ENCODE measurements at regions of chr19 and their contacts with region 1.

Region 1: GRCh38 chr19:588093-588740 is 1.5 kb upstream of the HCN2 start:
- DNase-seq: peak; percentile 87
- ATAC-seq: peak; percentile 77
- H3K4me3 Mint-ChIP-seq: no peak overlapping the region
- H3K27ac Mint-ChIP-seq: no peak overlapping the region
- H3K4me1 Mint-ChIP-seq: peaks cover 3% of the 10 kb centered on the region
- H3K27me3 Mint-ChIP-seq: peaks cover 19% of the 10 kb centered on the region

Region 2: DNA sequence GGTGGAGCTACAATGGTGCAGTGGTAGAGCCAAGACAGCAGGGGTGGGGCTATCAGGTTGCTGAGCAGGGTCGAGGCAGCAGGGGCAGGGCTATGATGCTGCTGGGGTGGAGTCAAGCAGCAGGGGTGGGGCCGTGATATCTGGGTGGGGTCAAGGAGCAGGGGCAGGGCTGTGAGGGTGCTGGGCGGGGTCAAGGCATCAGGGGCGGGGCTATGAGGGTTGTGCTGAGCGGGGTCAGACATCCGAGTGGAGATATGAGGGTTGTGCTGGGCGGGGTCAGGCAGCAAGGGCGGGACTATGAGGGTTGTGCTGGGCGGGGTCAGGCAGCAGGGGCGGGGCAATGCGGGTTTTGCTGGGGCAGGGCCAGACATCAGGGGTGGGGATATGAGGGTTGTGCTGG is 16.1 kb after region 1 on chr19:
- CTCF ChIA-PET with region 1: no interaction called
- POLR2A ChIA-PET with region 1: no interaction called
- intact Hi-C with region 1: no loop called
- DNase-seq: peak; percentile 82
- ATAC-seq: peak; percentile 87
- H3K4me3 Mint-ChIP-seq: no peak overlapping the region
- H3K27ac Mint-ChIP-seq: no peak overlapping the region
- H3K4me1 Mint-ChIP-seq: no peaks in the 10 kb centered on the region
- H3K27me3 Mint-ChIP-seq: no peaks in the 10 kb centered on the region

Region 3: GRCh38 chr19:628159-628558 is 39.9 kb after region 1 on chr19:
- CTCF ChIA-PET with region 1: no interaction called
- POLR2A ChIA-PET with region 1: no interaction called
- intact Hi-C with region 1: loop called (anchors 2 to 5 kb)
- DNase-seq: peak; percentile 48
- ATAC-seq: no peak
- H3K4me3 Mint-ChIP-seq: no peak overlapping the region
- H3K27ac Mint-ChIP-seq: no peak overlapping the region
- H3K4me1 Mint-ChIP-seq: peaks cover 20% of the 10 kb centered on the region
- H3K27me3 Mint-ChIP-seq: no peaks in the 10 kb centered on the region

Region 4: DNA sequence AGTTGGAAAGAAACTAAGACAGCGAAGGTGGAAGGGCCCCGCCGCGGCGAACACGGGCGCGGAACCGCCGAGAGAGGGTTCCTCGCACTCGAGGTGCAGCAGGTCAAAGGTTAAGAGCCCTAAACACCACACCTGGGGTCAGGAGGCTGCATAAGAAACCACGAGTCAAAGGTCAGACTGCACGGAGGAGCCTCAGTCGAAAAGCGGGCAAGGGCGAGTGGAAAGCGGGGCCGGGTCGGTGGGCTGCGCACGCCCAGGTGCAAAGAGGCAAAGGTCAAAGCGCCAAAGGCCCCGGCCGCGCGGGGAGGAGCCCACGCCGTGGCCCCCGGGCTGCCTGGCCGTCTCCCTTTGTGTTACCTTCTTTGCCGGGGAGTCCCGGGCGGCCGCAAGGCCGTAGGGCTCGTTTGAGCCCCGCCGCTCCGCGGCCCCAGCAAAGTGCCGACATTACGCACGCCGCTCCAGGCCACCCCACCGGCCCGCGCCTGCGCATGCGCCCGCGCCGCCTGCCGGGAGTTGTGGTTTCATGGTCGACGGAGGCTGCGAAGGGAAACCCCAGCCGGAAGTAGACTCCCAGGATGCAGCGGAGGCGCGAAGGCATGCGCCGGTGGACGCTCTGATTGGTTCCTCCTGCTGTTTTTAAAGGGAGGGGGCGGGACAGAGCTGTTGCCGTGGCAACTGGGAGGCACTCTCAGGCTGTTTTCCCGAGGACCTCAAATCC is 45.0 kb after region 1 on chr19 and contains the start of gene POLRMT:
- CTCF ChIA-PET with region 1: no interaction called
- POLR2A ChIA-PET with region 1: no interaction called
- intact Hi-C with region 1: loop called (anchors 2 to 5 kb)
- DNase-seq: peak; percentile 98
- ATAC-seq: peak; percentile 98
- H3K4me3 Mint-ChIP-seq: peak within 1 kb of the TSS; percentile 97
- H3K27ac Mint-ChIP-seq: peak within 1 kb of the TSS; percentile 91
- H3K4me1 Mint-ChIP-seq: peaks cover 29% of the 10 kb centered on the region
- H3K27me3 Mint-ChIP-seq: no peaks in the 10 kb centered on the region
- total RNA-seq, gene POLRMT: 69.0 to 77.4 TPM

Region 5: GRCh38 chr19:737581-738093 is 149.4 kb after region 1 on chr19:
- CTCF ChIA-PET with region 1: interaction called, 9 read pairs
- POLR2A ChIA-PET with region 1: no interaction called
- intact Hi-C with region 1: loop called (anchors 1 to 10 kb)
- DNase-seq: peak; percentile 76
- ATAC-seq: peak; percentile 79
- H3K4me3 Mint-ChIP-seq: no peak overlapping the region
- H3K27ac Mint-ChIP-seq: no peak overlapping the region
- H3K4me1 Mint-ChIP-seq: no peaks in the 10 kb centered on the region
- H3K27me3 Mint-ChIP-seq: no peaks in the 10 kb centered on the region

Measured in activated CD4-positive, alpha-beta T cell treated with anti-CD3 and anti-CD28 coated beads for 36 hours (primary cell).